Activated T-helper 2 cell treated with anti-CD3 and anti-CD28 coated beads, Interferon-gamma antibody, Interleukin-2, Interleukin-4, amounts not matched to agents 10 μg/mL and 5 μg/mL and 100 μg/mL, durations not matched to agents 14 hours and 24 hours and 36 hours (primary cell): ENCODE measurements at regions of chr13 and their contacts with region 1.

Region 1: GRCh38 chr13:49278211-49278610 is 30.5 kb downstream of the CDADC1 start:
- DNase-seq: no peak
- H3K4me3 Mint-ChIP-seq: no peak overlapping the region
- H3K27ac Mint-ChIP-seq: no peak overlapping the region
- H3K4me1 Mint-ChIP-seq: no peaks in the 10 kb centered on the region
- H3K27me3 Mint-ChIP-seq: no peaks in the 10 kb centered on the region

Region 2: GRCh38 chr13:49098771-49099512 is 179.3 kb before region 1 on chr13:
- intact Hi-C with region 1: loop called (anchors 5 kb)
- DNase-seq: no peak
- H3K4me3 Mint-ChIP-seq: no peak overlapping the region
- H3K27ac Mint-ChIP-seq: no peak overlapping the region
- H3K4me1 Mint-ChIP-seq: peaks cover 21% of the 10 kb centered on the region
- H3K27me3 Mint-ChIP-seq: no peaks in the 10 kb centered on the region

Region 3: DNA sequence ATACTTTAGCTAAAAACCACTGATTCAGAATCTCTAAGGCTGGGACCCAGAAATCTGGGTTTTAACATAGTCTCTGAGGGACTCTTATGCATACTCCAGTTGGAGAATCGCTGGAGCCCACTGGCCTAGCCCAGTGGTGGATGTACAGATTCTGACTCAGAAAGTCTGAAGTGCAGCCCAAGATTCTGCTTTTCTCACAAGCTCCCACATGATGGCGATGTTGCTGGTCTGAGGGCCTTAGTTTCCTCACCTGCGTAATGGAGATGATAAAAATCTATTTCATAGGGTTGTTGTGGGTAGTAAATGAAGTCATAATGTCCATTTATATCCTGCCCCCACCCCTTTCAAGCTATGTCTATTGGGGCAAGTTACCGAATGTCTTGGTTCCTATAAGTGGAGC is 38.2 kb before region 1 on chr13:
- intact Hi-C with region 1: loop called (anchors 1 kb)
- DNase-seq: no peak
- H3K4me3 Mint-ChIP-seq: no peak overlapping the region
- H3K27ac Mint-ChIP-seq: no peak overlapping the region
- H3K4me1 Mint-ChIP-seq: peaks cover 5% of the 10 kb centered on the region
- H3K27me3 Mint-ChIP-seq: peaks cover 21% of the 10 kb centered on the region

Region 4: GRCh38 chr13:49247643-49248621 is 30.3 kb before region 1 on chr13 and contains the start of gene CDADC1:
- intact Hi-C with region 1: loop called (anchors 2 kb)
- DNase-seq: peak; percentile 88
- H3K4me3 Mint-ChIP-seq: peak within 1 kb of the TSS; percentile 93
- H3K27ac Mint-ChIP-seq: peak within 1 kb of the TSS; percentile 96
- H3K4me1 Mint-ChIP-seq: peaks cover 26% of the 10 kb centered on the region
- H3K27me3 Mint-ChIP-seq: peaks cover 11% of the 10 kb centered on the region
- total RNA-seq, gene CDADC1: 7.4 and 8.6 TPM in 2 replicates